Activated CD4-positive, alpha-beta memory T cell treated with anti-CD3 and anti-CD28 coated beads for 36 hours (primary cell): ENCODE measurements at regions of chr5 and their contacts with region 1.

Region 1: GRCh38 chr5:133111299-133111698 is 59.5 kb downstream of the HSPA4 start:
- DNase-seq: peak; percentile 87
- H3K4me3 Mint-ChIP-seq: no peak overlapping the region
- H3K27ac Mint-ChIP-seq: no peak overlapping the region
- H3K4me1 Mint-ChIP-seq: peaks cover 33% of the 10 kb centered on the region
- H3K27me3 Mint-ChIP-seq: no peaks in the 10 kb centered on the region

Region 2: GRCh38 chr5:133260715-133261114 is 149.4 kb after region 1 on chr5:
- CTCF ChIA-PET with region 1: interaction called, 3 read pairs
- POLR2A ChIA-PET with region 1: no interaction called
- intact Hi-C with region 1: loop called (anchors 5 kb)
- DNase-seq: no peak
- H3K4me3 Mint-ChIP-seq: no peak overlapping the region
- H3K27ac Mint-ChIP-seq: no peak overlapping the region
- H3K4me1 Mint-ChIP-seq: peaks cover 14% of the 10 kb centered on the region
- H3K27me3 Mint-ChIP-seq: peaks cover 6% of the 10 kb centered on the region

Region 3: DNA sequence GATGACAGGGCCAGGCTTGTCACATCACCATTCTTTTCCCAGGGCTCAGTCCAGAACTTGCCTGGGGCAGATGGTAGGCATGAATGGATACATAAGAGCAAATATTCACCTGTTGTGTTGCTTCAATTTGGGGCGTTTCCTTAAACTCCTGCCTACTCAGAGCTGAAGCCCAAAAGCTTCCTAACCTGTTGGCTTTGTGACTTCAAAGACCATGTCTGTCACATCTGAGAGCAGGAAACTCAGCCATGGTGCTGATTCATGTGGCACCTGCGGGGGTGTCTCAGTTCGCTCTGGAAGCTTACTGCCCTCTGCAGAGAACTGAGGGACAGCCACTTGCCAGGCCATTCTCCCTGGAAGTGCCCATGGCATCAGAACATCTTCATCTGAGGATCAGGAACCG is 187.1 kb after region 1 on chr5:
- CTCF ChIA-PET with region 1: no interaction called
- POLR2A ChIA-PET with region 1: no interaction called
- intact Hi-C with region 1: loop called (anchors 1 kb)
- DNase-seq: peak; percentile 66
- H3K4me3 Mint-ChIP-seq: no peak overlapping the region
- H3K27ac Mint-ChIP-seq: no peak overlapping the region
- H3K4me1 Mint-ChIP-seq: no peaks in the 10 kb centered on the region
- H3K27me3 Mint-ChIP-seq: peaks cover 3% of the 10 kb centered on the region

Region 4: GRCh38 chr5:133321833-133322420 is 210.6 kb after region 1 on chr5:
- CTCF ChIA-PET with region 1: interaction called, 9 read pairs
- POLR2A ChIA-PET with region 1: no interaction called
- intact Hi-C with region 1: loop called (anchors 10 kb)
- DNase-seq: peak; percentile 80
- H3K4me3 Mint-ChIP-seq: no peak overlapping the region
- H3K27ac Mint-ChIP-seq: peak overlapping the region; percentile 33
- H3K4me1 Mint-ChIP-seq: peaks cover 16% of the 10 kb centered on the region
- H3K27me3 Mint-ChIP-seq: peaks cover 1% of the 10 kb centered on the region

Region 5: DNA sequence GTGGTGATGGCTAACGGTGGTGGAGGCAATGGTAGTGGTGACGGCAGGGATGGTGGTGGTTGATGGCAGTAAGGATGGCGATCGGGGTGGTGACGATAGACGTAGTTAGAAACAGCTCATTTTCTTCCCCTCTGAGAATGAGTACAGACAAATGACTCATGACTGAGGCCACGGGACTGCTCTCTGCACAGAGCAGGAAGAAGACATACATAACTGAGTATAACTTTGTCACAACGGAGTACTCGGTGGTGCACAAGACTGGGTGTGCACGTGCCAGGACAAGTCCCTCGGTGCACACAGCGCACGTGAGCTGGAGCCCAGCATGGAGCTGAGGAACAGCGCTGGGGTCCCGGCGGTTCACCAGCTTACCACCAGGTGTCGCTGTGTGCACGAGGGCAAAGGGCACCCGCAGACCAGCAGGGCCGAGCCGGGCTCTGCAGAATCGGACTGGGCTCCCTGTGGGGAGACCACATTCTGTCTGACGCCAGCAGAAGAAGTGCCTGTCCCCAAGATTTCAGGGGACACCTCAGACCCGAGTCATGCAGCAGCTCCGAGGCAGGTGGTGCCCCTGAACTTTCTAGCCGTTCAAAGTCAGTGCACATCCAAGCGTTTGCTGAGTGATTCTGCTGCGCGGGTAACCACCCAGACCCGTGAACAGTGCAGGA is 312.5 kb after region 1 on chr5:
- CTCF ChIA-PET with region 1: interaction called, 21 read pairs
- POLR2A ChIA-PET with region 1: no interaction called
- intact Hi-C with region 1: no loop called
- DNase-seq: peak; percentile 76
- H3K4me3 Mint-ChIP-seq: no peak overlapping the region
- H3K27ac Mint-ChIP-seq: no peak overlapping the region
- H3K4me1 Mint-ChIP-seq: peaks cover 10% of the 10 kb centered on the region
- H3K27me3 Mint-ChIP-seq: peaks cover 11% of the 10 kb centered on the region

Region 6: DNA sequence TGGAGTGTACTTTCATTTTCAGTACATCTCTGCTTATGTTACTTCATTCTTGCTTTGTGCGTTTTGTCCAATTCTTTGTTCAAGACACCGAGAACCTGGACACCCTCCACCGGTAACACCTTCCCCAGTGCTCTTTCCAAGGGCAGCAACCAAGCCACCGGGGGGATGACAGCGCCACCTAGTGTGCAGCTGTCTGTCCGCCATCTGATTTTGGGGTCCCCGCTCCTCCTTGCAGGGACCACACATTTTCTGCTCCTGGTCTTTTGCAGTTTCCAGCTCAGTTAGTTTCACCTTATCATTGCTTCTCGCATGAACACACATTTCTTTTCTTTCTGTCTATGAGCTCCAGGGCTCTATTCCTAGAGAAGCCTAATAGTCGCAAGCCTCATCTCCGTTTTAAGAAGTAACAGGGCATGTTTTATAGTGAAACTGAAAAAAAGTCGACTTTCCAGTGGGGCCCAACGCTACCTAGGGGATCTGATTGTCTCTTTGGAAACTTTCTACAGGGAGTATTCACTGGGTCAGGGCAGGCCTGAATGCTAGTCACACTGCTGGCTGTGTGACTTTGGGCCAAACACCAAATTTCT is 349.0 kb after region 1 on chr5:
- CTCF ChIA-PET with region 1: interaction called, 6 read pairs
- POLR2A ChIA-PET with region 1: no interaction called
- intact Hi-C with region 1: loop called (anchors 2 kb)
- DNase-seq: peak; percentile 63
- H3K4me3 Mint-ChIP-seq: no peak overlapping the region
- H3K27ac Mint-ChIP-seq: no peak overlapping the region
- H3K4me1 Mint-ChIP-seq: peaks cover 7% of the 10 kb centered on the region
- H3K27me3 Mint-ChIP-seq: peaks cover 2% of the 10 kb centered on the region